ENCODE measurements at regions of chr4 and their contacts with region 1.

Region 1: DNA sequence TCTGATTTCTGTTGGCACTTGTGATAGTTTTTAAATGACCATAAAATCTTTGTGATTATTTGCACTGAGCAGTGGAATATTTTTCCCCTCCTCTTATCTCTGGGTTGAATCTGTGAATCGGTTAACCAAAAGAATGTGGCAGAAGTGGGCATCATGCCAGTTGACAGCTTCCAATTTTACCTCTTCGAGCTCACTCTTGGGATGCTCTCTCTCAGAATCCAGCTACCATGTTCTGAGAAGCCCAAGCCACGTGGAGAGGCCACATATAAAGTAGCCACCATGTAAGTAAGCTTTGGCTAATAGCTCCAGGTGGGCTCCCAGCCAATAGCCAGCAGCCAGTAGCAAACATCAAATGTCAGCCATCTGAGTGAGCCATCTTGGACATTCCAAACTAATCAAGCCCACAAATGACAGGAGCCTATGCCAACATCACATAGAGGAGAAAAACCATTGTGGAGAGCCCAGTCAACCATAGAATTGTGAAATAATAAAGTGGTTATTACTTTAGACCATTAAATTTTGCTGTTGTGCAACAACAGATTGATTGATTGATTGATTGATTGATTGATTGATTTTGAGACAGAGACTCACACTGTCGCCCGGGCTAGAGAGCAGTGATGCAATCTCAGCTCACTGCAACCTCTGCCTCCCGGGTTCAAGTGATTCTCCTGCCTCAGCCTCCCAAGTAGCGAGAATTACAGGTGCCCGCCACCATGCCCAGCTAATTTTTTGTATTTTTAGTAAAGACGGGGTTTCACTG is 12.7 kb upstream of the WDR19 start:
- DNase-seq: no peak
- H3K4me3 Mint-ChIP-seq: no peak overlapping the region
- H3K27ac Mint-ChIP-seq: no peak overlapping the region
- H3K4me1 Mint-ChIP-seq: peaks cover 2% of the 10 kb centered on the region
- H3K27me3 Mint-ChIP-seq: peaks cover 6% of the 10 kb centered on the region

Region 2: GRCh38 chr4:39181905-39182638 is 12.5 kb after region 1 on chr4 and contains the start of gene WDR19:
- CTCF ChIA-PET with region 1: interaction called, 11 read pairs
- POLR2A ChIA-PET with region 1: no interaction called
- DNase-seq: peak; percentile 99
- H3K4me3 Mint-ChIP-seq: no peak within 1 kb of the TSS
- H3K27ac Mint-ChIP-seq: no peak within 1 kb of the TSS
- H3K4me1 Mint-ChIP-seq: peaks cover 15% of the 10 kb centered on the region
- H3K27me3 Mint-ChIP-seq: peaks cover 2% of the 10 kb centered on the region
- total RNA-seq, gene WDR19: 9.9 to 12.1 TPM

Region 3: DNA sequence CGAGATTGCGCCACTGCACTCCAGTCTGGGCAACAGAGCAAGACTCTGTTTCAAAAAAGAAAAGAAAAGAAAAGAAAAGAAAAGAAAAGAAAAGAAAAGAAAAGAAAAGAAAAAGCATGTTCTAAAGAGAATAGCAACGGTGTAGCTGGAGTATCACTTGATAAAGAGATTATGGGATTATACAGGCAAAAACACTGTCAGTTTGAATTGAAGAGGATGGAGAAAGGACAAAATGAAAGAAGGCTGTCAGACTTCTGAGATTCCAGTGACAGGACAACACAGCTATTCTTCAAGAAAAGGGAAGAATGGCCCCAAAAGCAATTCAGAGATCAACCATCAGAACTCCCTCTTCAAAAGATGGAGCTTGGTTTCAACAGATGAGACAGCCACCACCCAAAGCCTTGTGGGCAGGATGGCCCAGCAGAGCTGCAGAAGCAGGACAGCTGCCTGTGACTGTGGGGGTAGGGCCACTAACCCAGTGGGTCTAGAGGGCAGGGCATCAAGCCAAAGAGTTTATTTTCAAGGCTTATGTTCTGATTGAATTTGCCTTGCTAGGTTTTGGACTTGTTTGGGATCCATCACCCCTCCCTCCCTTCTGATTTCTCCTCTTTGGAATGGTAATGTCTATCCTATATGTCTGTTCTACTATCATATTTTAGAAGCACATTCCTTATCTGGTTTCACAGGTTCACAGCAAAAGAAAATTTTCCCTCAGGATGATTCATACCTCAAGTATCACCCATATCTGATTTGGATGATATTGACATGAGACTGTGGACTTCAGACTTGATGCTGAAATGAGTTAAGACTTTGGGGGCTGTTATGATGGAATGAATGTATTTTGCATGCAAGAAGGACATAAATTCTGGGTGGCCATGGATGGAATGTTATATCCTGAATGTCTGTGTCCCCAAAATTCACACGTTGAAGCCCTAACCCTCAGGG is 179.0 kb after region 1 on chr4:
- CTCF ChIA-PET with region 1: no interaction called
- POLR2A ChIA-PET with region 1: no interaction called
- DNase-seq: no peak
- H3K4me3 Mint-ChIP-seq: no peak overlapping the region
- H3K27ac Mint-ChIP-seq: no peak overlapping the region
- H3K4me1 Mint-ChIP-seq: peaks cover 47% of the 10 kb centered on the region
- H3K27me3 Mint-ChIP-seq: no peaks in the 10 kb centered on the region